Left ventricle myocardium inferior (tissue), 1 donor: ENCODE measurements at regions of chr21 and their contacts with region 1.

Region 1: GRCh38 chr21:40143822-40144525 is 276.7 kb downstream of the PCP4 start:
- DNase-seq: peak; percentile 26
- H3K4me3 ChIP-seq: no peak overlapping the region
- H3K27ac ChIP-seq: no peak overlapping the region
- H3K4me1 ChIP-seq: no peaks in the 10 kb centered on the region
- H3K27me3 ChIP-seq: peaks cover 20% of the 10 kb centered on the region
- CTCF ChIP-seq: peak; percentile 77

Region 2: GRCh38 chr21:39852021-39852721 is 291.8 kb before region 1 on chr21:
- intact Hi-C with region 1: no loop called
- DNase-seq: no peak
- H3K4me3 ChIP-seq: no peak overlapping the region
- H3K27ac ChIP-seq: no peak overlapping the region
- H3K4me1 ChIP-seq: peaks cover 6% of the 10 kb centered on the region
- H3K27me3 ChIP-seq: no peaks in the 10 kb centered on the region
- CTCF ChIP-seq: no peak

Region 3: DNA sequence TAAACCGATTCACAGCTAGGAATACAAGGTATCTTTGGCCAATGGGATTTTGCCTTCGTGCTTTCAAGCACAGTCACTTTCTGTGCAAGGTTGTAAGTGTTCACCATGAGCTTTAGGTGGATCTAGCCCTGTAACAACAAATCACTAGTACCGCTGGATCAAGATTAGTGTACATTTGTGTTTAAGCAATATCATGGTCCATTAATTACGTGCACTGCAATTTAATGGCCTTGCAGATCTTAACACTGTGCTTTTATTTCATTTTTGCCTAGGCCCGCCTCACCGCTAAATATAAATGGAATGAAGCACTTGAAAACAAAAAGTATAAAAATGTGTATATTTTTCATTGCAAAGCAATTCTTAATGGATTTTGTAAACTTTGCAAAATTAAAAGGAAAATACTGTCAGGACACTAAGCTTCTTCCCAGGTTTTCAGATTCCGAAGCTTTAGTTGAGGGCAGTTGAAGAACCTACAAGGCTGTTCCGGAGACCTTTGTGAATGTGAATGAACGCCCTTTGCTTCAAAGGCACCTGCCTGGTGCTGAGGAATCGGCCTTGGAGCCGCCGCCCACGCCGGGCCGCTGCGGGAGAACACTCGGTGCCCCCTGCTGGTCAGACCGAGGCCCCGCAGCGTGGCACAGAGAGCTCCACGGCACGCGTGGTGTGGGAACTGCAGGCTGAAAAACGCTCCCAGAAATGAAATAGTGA is 242.1 kb after region 1 on chr21:
- intact Hi-C with region 1: loop called (anchors 5 kb)
- DNase-seq: peak; percentile 32
- H3K4me3 ChIP-seq: no peak overlapping the region
- H3K27ac ChIP-seq: no peak overlapping the region
- H3K4me1 ChIP-seq: no peaks in the 10 kb centered on the region
- H3K27me3 ChIP-seq: peaks cover 45% of the 10 kb centered on the region
- CTCF ChIP-seq: peak; percentile 78

Region 4: DNA sequence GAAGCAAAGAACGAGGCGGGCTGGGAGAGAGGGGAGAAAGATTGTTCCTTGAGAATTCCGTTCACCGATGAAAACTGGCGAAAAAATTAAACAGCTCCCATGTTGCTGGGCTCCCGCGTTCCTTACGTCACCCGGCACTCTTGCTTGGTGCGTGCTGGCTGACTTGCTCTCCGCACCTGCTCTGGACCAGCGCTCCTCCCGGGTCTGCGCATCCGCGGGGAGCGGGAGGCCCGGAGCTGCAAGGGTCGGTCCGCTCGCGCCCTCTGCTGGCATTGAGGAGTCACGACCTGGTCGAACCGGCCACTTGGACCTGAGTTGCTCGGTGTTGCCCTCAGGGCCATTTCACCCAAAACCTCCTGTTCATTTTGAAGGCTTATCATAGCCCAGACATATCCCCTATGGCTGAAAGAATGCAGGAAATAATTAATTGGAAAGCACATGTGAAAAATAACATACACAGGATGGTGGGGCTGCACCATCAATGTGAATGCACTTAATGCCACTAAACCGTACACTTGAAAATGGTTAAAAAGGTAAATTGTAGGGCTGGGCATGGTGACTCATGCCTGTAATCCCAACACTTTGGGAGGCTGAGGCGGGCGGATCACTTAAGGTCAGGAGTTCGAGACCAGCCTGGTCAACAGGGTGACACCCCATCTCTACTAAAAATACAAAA is 925.1 kb after region 1 on chr21:
- intact Hi-C with region 1: loop called (anchors 10 kb)
- DNase-seq: peak; percentile 80
- H3K4me3 ChIP-seq: peak overlapping the region; percentile 57
- H3K27ac ChIP-seq: no peak overlapping the region
- H3K4me1 ChIP-seq: peaks cover 12% of the 10 kb centered on the region
- H3K27me3 ChIP-seq: peaks cover 55% of the 10 kb centered on the region
- CTCF ChIP-seq: peak; percentile 95